MCF 10A (cell line): ENCODE measurements at regions of chr1 and their contacts with region 1.

Region 1: DNA sequence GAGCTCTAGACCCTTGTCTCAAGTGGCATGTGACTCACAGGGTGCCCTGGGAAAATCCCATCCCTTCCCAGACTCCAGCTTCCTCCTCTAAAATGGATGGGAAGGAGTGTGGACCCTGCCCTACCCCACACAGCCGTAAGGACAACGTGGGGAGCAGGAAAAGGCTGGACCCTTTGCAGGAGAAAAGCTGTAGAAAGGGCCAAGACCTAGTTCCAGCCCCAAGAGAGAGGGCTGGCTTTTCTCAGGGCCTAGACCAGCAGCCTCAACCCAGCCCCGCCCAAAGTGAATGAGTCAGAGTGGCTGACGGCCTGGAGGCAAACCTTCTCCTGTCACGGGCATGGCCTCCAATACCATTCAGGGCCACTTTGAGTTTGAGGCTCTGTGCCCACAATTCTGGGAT is 1.1 kb downstream of the LAMB3 start:
- DNase-seq: peak; percentile 99
- H3K4me3 Mint-ChIP-seq: peak overlapping the region; percentile 83
- H3K27ac Mint-ChIP-seq: peak overlapping the region; percentile 99
- H3K4me1 Mint-ChIP-seq: peaks cover 80% of the 10 kb centered on the region
- H3K27me3 Mint-ChIP-seq: no peaks in the 10 kb centered on the region
- CTCF ChIP-seq: no peak

Region 2: DNA sequence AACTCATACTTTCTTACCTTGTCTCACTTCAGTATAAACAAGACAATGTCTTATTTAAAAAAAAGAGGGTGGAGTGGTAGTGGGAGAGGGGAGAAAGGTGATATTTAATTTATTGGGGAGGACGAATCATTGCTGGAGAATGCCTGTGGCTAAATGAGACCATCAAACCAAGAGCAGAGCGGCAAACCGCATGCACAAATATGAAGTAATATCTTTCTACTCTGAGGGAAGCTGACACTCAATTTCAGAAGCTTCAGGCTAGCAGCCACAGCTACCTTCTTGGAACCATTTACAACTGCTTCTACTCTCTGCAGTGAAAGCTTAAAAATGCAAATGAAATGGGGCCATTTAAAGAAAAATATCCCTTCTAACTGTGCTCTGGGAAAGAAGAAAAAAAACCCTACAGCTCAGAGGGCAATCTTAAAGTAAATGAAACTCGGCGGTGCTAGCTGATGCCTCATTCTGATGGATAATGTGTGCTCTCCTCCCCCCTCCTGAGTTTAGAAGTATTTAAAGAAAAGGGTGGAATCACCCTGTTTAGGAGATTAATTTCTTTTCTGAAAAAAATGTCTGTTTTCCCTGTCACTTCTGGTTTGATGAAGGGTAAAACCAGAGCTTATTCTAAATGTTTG is 245.8 kb before region 1 on chr1:
- CTCF ChIA-PET with region 1: no interaction called
- POLR2A ChIA-PET with region 1: interaction called, 4 read pairs
- intact Hi-C with region 1: loop called (anchors 10 kb)
- DNase-seq: peak; percentile 81
- H3K4me3 Mint-ChIP-seq: peak overlapping the region; percentile 17
- H3K27ac Mint-ChIP-seq: no peak overlapping the region
- H3K4me1 Mint-ChIP-seq: peaks cover 16% of the 10 kb centered on the region
- H3K27me3 Mint-ChIP-seq: no peaks in the 10 kb centered on the region
- CTCF ChIP-seq: no peak

Region 3: GRCh38 chr1:209554761-209555611 is 96.2 kb before region 1 on chr1:
- CTCF ChIA-PET with region 1: no interaction called
- POLR2A ChIA-PET with region 1: no interaction called
- intact Hi-C with region 1: no loop called
- DNase-seq: no peak
- H3K4me3 Mint-ChIP-seq: no peak overlapping the region
- H3K27ac Mint-ChIP-seq: no peak overlapping the region
- H3K4me1 Mint-ChIP-seq: peaks cover 13% of the 10 kb centered on the region
- H3K27me3 Mint-ChIP-seq: no peaks in the 10 kb centered on the region
- CTCF ChIP-seq: peak; percentile 23

Region 4: GRCh38 chr1:209576798-209577197 is 74.3 kb before region 1 on chr1:
- CTCF ChIA-PET with region 1: interaction called, 17 read pairs
- POLR2A ChIA-PET with region 1: no interaction called
- intact Hi-C with region 1: loop called (anchors 2 kb)
- DNase-seq: peak; percentile 97
- H3K4me3 Mint-ChIP-seq: no peak overlapping the region
- H3K27ac Mint-ChIP-seq: no peak overlapping the region
- H3K4me1 Mint-ChIP-seq: peaks cover 8% of the 10 kb centered on the region
- H3K27me3 Mint-ChIP-seq: peaks cover 19% of the 10 kb centered on the region
- CTCF ChIP-seq: peak; percentile 100

Region 5: DNA sequence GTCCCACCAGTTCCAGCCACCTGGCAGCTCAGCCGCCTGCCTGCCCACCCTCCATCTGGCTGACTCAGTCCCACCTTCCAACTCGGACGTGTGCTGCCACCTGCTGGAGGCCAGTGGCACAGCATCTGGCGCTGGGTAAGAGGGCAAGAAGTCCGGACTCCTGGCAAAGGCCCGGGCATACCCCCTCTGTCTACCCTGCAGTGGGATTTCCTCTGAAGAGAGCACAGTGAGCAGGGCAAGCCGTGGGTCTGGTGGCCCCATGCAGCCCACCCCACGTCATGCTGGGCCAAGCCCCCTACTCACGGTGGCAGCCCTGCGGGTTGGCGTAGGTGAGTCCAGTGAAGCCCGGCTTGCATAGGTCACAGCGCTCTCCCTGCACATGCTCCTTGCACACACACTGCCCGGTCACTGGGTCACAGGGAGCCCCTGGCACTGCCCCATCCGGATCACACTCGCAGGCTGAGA is 23.4 kb before region 1 on chr1:
- CTCF ChIA-PET with region 1: interaction called, 25 read pairs
- POLR2A ChIA-PET with region 1: interaction called, 20 read pairs
- intact Hi-C with region 1: no loop called
- DNase-seq: peak; percentile 84
- H3K4me3 Mint-ChIP-seq: no peak overlapping the region
- H3K27ac Mint-ChIP-seq: peak overlapping the region; percentile 11
- H3K4me1 Mint-ChIP-seq: peaks cover 40% of the 10 kb centered on the region
- H3K27me3 Mint-ChIP-seq: no peaks in the 10 kb centered on the region
- CTCF ChIP-seq: peak; percentile 99

Region 6: DNA sequence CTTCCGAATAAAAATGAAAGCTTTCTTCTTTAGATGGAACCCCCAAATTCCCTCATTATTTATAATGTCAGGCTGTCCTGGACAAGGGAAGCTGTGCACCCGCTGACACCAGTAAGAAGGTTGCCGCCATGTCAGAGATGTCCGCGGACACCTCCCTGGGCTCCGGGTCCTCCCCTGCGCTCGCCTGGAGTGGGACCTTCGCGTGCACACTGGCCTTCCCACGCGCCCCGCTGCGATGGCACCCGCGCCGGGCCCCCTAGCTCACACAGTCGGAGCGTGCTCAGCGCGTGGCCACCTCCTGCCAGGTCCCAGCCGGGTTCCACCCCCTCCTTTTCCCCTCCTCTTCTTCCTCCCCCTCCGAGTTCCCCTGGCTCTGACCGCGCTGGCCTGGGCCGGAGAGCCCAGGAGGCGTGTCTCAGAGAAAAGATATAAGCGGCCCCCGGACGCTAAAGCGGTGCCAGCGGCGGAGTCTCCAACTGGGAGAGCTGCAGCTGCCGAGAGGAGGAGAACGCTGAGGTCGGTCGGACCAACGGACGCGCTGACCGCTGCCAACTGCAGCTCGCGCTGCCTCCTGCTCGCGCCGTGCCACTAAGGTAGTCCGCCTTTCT is 23.9 kb after region 1 on chr1 and contains the start of gene G0S2:
- CTCF ChIA-PET with region 1: interaction called, 564 read pairs
- POLR2A ChIA-PET with region 1: interaction called, 458 read pairs
- intact Hi-C with region 1: loop called (anchors 1 kb)
- DNase-seq: no peak
- H3K4me3 Mint-ChIP-seq: no peak within 1 kb of the TSS
- H3K27ac Mint-ChIP-seq: peak within 1 kb of the TSS; percentile 66
- H3K4me1 Mint-ChIP-seq: peaks cover 36% of the 10 kb centered on the region
- H3K27me3 Mint-ChIP-seq: no peaks in the 10 kb centered on the region
- CTCF ChIP-seq: no peak
- total RNA-seq, gene G0S2: not detected in 2 replicates

Region 7: DNA sequence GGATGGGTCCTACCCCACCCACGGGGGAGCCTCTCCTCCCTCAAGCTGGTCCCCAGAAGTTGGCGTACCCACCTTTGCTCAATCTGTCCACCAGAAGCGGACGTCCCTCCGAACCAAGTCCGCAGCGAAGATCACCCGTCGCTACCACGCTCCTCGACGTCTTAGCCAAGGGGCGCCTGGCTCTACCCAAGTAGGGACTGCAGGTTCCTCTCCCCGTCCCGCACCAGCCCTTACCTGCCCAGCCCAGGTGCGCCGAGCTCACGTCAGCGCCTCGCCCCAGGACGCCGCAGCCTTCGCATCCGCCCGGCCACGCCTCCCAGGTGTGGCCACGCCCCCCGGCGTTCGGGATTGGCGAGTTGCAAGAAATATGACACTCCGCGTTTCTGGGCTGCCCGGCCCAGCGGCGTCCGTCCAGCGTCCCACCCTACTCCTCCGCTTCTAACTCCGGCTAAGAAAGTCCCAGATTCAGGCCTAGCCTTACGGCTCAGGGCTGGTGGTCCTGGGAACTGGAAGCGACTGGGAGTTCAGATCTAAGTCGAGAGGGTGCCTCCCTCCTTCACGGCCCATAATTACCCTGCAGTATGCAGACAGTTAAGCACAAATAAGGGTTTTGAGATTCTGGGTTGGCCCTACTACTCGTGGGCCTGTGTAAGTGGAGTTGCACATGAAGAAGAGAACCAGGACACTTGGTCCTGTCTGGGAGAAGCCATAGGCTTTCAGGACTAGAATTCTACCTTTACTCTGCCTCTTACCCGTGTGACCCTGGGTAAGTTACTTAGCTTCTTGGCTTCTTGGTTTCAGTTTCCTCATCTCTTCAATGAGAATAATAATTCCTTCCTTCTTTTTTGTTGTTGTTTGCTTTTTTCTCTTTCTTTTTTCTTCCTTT is 155.0 kb after region 1 on chr1 and contains the start of gene IRF6:
- CTCF ChIA-PET with region 1: interaction called, 7 read pairs
- POLR2A ChIA-PET with region 1: interaction called, 104 read pairs
- intact Hi-C with region 1: no loop called
- DNase-seq: peak; percentile 99
- H3K4me3 Mint-ChIP-seq: peak within 1 kb of the TSS; percentile 90
- H3K27ac Mint-ChIP-seq: peak within 1 kb of the TSS; percentile 92
- H3K4me1 Mint-ChIP-seq: peaks cover 74% of the 10 kb centered on the region
- H3K27me3 Mint-ChIP-seq: no peaks in the 10 kb centered on the region
- CTCF ChIP-seq: no peak
- total RNA-seq, gene IRF6: 87.8 and 106 TPM in 2 replicates

Region 8: DNA sequence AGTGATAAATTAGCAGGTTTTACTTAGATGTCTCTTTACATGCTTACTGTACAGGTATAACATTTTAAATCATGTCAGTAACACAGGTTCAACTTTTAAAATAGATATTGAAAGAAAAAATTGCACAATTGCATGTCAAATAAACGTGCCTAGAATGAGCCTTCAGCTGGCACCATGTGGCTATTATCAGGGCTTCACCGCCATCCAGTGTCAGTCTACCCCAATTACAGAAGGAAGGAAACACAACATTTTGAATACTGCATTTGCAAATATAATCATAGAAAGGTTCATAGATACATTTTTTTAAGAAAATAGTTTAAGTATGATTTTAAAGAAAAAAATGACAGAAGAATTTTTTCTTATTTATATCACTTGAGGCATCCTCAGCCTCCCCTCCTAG is 533.9 kb after region 1 on chr1:
- CTCF ChIA-PET with region 1: no interaction called
- POLR2A ChIA-PET with region 1: no interaction called
- intact Hi-C with region 1: no loop called
- DNase-seq: no peak
- H3K4me3 Mint-ChIP-seq: no peak overlapping the region
- H3K27ac Mint-ChIP-seq: no peak overlapping the region
- H3K4me1 Mint-ChIP-seq: no peaks in the 10 kb centered on the region
- H3K27me3 Mint-ChIP-seq: peaks cover 8% of the 10 kb centered on the region
- CTCF ChIP-seq: no peak